Endothelial cell of umbilical vein (primary cell): ENCODE measurements at regions of chr5 and their contacts with region 1.

Region 1: DNA sequence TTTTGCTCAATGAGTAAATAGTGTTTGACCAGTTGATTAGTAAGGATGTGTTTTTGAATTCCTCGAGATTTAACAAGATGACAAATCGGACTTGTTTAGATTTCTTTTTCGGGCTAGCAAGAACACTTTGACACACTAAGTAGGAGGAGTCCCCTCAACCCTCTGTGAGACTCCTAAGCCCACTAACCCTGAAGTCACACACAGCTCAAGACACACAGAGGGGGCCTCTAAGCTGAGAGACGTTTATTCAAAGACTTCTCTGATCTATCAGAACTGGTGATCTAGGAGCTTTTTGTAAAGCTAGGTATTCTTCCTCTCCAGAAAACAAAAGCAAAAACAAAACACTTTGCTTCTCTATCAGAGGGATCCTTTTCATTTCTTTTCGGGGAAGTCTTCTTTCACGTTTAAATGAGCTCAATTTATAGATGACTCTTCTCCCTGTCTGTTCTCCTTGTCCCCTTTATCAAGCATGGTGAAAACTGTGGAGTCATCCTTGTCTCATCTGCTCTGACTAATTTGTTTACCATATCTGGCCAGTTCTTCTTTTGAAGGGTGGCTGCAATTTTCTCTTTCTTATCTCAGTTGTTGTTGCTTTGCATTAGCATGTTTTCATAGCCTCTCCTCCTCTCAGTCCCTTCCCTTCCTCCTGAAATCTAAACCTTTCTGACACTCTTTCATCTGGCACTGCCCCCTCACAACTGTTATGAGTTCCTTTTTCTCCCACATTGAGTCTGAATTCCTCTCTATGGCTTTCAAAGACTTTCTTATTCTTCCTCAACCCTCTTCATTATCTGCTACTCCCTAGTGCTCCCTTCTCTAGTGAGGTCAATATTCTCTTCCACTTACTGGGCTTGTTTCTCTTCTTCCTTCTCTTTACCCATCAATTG is 68.5 kb upstream of the RAI14 start:
- DNase-seq: peak; percentile 70
- H3K4me3 ChIP-seq: no peak overlapping the region
- H3K27ac ChIP-seq: peak overlapping the region; percentile 99
- H3K4me1 ChIP-seq: peaks cover 60% of the 10 kb centered on the region
- H3K27me3 ChIP-seq: no peaks in the 10 kb centered on the region
- CTCF ChIP-seq: no peak
- POLR2A ChIP-seq: no peak

Region 2: DNA sequence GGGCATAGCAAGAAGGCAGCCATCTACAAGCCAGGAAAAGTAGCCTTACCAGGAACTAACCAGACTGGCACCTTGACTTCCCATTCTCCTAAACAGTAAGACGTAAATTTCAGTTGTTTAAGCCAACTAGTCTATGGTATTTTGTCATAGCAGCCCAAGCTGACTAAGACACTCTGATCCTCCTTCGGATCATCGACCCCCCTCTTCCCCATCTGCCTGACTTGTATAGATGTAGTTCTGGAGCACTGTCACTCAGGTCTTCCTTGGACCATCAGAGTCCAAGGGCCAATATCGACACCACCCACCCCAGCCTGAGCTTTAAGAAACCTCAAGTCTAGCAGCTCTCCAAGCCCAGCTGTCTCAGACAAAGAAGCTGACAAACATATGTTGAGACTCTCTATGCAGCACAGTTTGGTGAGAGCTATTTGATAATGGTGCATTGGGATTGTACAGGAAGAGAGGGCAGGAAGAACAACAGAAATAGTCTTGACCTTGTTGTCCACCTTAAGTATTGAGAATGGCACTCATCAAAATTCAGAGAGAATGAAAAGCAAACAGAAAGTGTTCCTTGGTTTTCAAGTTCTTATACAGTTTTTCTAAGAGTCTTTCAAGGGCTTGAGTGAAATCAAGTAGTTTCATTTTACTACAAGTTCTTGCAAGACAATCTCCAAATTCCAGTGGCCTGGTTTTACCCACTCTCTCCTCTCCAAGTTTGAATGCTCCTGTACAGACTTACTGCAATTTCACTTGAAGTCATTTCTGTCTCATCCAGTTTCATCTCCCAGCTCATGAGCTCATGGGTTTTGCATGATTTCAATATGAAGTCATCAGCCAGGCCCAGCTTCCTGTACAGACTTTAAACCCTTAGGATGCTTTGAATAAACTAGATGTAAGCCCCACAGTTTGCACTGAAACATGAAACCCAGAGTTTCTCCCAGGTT is 53.7 kb before region 1 on chr5:
- CTCF ChIA-PET with region 1: interaction called, 4 read pairs
- POLR2A ChIA-PET with region 1: interaction called, 3 read pairs
- dilution Hi-C with region 1: no loop called
- intact Hi-C with region 1: loop called (anchors 2 kb)
- DNase-seq: peak; percentile 39
- H3K4me3 ChIP-seq: no peak overlapping the region
- H3K27ac ChIP-seq: no peak overlapping the region
- H3K4me1 ChIP-seq: peaks cover 11% of the 10 kb centered on the region
- H3K27me3 ChIP-seq: no peaks in the 10 kb centered on the region
- CTCF ChIP-seq: no peak
- POLR2A ChIP-seq: no peak

Region 3: GRCh38 chr5:34598177-34598794 is 10.7 kb after region 1 on chr5:
- CTCF ChIA-PET with region 1: interaction called, 8 read pairs
- POLR2A ChIA-PET with region 1: interaction called, 4 read pairs
- dilution Hi-C with region 1: no loop called
- intact Hi-C with region 1: loop called (anchors 1 kb)
- DNase-seq: peak; percentile 90
- H3K4me3 ChIP-seq: no peak overlapping the region
- H3K27ac ChIP-seq: peak overlapping the region; percentile 84
- H3K4me1 ChIP-seq: peaks cover 25% of the 10 kb centered on the region
- H3K27me3 ChIP-seq: no peaks in the 10 kb centered on the region
- CTCF ChIP-seq: no peak
- POLR2A ChIP-seq: no peak

Region 4: GRCh38 chr5:34626036-34626754 is 38.6 kb after region 1 on chr5:
- CTCF ChIA-PET with region 1: interaction called, 12 read pairs
- POLR2A ChIA-PET with region 1: interaction called, 7 read pairs
- dilution Hi-C with region 1: no loop called
- intact Hi-C with region 1: loop called (anchors 1 kb)
- DNase-seq: peak; percentile 88
- H3K4me3 ChIP-seq: no peak overlapping the region
- H3K27ac ChIP-seq: peak overlapping the region; percentile 78
- H3K4me1 ChIP-seq: peaks cover 44% of the 10 kb centered on the region
- H3K27me3 ChIP-seq: no peaks in the 10 kb centered on the region
- CTCF ChIP-seq: no peak
- POLR2A ChIP-seq: no peak

Region 5: DNA sequence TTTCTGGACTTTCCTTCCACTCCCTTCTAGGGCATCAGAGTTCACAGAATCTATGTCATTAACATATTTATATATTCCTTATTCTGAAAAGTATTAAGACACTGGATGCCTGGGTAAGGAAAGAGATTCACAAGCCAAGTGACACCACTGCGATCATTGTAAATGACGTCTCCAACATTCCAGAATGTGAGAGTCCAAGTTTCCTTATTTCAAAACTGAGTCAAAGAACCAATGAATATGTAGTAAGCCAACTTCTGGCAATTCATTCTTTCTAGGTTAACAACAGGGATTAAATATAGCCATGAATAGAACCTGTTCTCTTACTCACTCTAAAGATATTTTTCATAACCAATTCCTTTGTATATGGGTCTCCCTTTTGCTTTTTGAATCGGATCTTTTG is 86.6 kb after region 1 on chr5:
- CTCF ChIA-PET with region 1: no interaction called
- POLR2A ChIA-PET with region 1: interaction called, 6 read pairs
- dilution Hi-C with region 1: no loop called
- intact Hi-C with region 1: loop called (anchors 5 kb)
- DNase-seq: no peak
- H3K4me3 ChIP-seq: no peak overlapping the region
- H3K27ac ChIP-seq: peak overlapping the region; percentile 90
- H3K4me1 ChIP-seq: peaks cover 77% of the 10 kb centered on the region
- H3K27me3 ChIP-seq: no peaks in the 10 kb centered on the region
- CTCF ChIP-seq: no peak
- POLR2A ChIP-seq: no peak

Region 6: DNA sequence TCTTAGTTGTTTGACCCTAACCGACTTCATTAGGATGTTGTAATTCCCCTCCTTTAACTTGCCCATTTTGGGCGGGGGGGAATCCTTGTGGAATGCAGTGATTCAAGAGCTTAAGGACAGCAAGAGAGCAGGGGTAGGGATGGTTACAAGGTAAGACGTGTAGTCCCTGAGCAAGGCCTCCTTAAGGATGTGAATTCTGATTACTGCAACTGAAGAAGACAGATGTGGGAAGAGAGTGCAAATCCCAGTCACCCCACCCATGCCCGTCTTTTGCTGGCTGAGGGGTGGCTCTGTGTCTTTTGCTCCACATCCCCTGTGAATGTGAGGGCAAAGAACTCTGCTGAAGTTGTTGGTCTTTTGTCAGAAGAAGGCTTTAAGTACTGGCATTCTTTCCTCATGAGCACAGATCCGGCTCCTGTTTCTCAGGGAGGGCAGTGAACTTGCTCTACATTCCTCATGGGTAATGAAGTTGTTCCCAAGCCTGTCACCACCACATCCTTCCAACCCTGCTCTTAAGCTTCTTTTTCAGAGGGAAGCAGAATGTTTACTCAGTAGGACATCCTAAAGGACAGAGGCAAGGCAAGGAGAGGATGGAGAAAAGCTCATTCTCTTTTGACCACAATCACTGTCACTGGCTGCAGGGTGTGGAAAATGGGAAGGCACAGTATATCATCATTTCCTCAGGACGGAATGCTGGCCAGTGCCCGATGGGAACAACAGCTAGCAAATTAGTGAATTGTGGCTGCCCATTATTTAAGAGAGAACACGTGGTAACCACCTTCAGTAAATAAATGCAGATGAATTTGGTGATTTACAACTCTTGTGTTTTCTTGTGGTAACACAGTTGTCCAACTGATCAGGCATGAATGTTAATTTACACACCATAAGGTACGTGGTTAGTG is 130.1 kb after region 1 on chr5:
- CTCF ChIA-PET with region 1: interaction called, 3 read pairs
- POLR2A ChIA-PET with region 1: no interaction called
- dilution Hi-C with region 1: no loop called
- intact Hi-C with region 1: loop called (anchors 1 kb)
- DNase-seq: peak; percentile 96
- H3K4me3 ChIP-seq: peak overlapping the region in 1 of 3 experiments; percentile 25
- H3K27ac ChIP-seq: peak overlapping the region; percentile 96
- H3K4me1 ChIP-seq: peaks cover 70% of the 10 kb centered on the region
- H3K27me3 ChIP-seq: no peaks in the 10 kb centered on the region
- CTCF ChIP-seq: no peak
- POLR2A ChIP-seq: peak; percentile 18